Activated CD4-positive, alpha-beta T cell treated with anti-CD3 and anti-CD28 coated beads for 36 hours (primary cell): ENCODE measurements at regions of chr16 and their contacts with region 1.

Region 1: DNA sequence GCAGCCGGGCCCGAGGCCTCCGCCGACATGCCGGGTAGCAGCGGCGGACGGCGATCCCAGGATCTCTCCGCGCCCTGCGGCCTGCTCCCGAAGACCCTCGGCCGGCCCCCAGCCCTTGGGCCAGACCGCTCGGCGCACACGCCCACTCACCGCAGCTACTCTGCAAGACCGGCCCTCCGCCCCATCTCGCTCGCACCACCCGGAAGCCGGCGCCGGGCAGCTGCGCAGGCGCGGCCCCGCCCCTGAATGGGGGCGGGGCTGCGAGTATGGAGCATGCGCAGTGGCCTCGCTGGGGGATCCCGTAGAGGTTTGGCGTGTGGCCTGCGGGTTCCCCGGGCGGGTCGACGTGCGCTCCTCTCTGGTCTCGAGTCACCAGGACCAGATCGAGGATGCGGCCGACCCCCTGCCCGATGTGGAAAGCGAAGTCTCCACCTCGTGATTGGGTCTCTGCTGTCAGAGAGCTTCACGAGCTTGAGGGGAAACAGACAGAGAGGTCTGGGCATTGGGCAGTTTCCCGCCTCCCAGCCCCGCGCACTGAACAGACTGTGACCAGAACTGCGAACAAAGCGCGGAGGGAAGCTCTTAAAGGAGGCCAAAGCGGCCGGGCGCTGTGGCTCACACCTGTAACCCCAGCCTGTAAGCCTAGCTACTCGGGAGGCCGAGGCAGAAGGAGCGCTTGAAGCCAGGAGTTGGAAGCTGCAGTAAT is at the start of gene KCTD13:
- DNase-seq: peak; percentile 92
- ATAC-seq: peak; percentile 90
- H3K4me3 Mint-ChIP-seq: peak within 1 kb of the TSS; percentile 82
- H3K27ac Mint-ChIP-seq: peak within 1 kb of the TSS; percentile 95
- H3K4me1 Mint-ChIP-seq: peaks cover 32% of the 10 kb centered on the region
- H3K27me3 Mint-ChIP-seq: no peaks in the 10 kb centered on the region
- total RNA-seq, gene KCTD13: 30.4 to 33.4 TPM

Region 2: DNA sequence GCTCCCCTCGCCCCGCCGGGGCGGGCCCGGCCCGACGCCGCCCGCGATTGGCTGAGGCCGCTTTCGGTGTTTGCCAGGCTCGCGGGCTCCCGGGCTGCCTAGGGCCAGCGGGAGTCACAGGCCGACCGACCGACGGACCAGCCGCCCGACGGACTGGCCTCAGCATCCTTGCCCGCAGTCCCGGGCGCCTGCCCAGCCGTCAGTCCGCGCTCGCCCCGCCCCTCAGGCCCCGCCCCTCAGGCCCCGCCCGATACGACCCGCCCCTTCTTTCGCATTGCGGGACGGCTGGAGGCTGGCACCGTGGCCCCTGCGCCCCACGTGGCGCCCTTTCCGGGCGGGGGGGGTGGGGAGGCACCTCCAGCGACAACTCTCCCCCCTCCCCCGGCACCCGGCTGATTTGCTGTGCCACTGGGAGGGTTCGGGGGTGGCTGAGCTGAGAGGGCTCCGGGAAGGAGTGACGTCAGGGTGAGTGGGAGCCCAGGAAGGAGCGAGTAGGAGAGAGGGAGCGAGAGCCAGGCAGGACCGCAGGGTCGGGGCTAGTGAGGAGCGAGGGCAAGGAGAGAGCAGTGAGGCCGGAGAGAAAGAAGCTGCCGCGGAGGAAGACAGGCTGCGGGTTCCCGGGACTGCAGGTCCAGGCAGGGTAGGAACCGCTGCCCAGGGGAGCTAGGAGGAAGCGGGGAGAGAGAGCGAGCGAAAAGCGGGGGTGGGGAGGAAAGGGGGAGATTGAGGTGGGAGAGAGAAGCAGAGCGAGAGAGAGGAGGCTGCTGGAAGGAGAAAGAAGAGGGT is 25.9 kb before region 1 on chr16 and contains the start of gene ASPHD1:
- CTCF ChIA-PET with region 1: interaction called, 3 read pairs
- POLR2A ChIA-PET with region 1: no interaction called
- intact Hi-C with region 1: loop called (anchors 1 kb)
- DNase-seq: peak; percentile 84
- ATAC-seq: peak; percentile 92
- H3K4me3 Mint-ChIP-seq: peak within 1 kb of the TSS; percentile 74
- H3K27ac Mint-ChIP-seq: peak within 1 kb of the TSS; percentile 38
- H3K4me1 Mint-ChIP-seq: peaks cover 13% of the 10 kb centered on the region
- H3K27me3 Mint-ChIP-seq: peaks cover 21% of the 10 kb centered on the region
- total RNA-seq, gene ASPHD1: 2.7 to 3.2 TPM